HepG2 (cell line): ENCODE measurements at regions of chr7 and their contacts with region 1.

Region 1: DNA sequence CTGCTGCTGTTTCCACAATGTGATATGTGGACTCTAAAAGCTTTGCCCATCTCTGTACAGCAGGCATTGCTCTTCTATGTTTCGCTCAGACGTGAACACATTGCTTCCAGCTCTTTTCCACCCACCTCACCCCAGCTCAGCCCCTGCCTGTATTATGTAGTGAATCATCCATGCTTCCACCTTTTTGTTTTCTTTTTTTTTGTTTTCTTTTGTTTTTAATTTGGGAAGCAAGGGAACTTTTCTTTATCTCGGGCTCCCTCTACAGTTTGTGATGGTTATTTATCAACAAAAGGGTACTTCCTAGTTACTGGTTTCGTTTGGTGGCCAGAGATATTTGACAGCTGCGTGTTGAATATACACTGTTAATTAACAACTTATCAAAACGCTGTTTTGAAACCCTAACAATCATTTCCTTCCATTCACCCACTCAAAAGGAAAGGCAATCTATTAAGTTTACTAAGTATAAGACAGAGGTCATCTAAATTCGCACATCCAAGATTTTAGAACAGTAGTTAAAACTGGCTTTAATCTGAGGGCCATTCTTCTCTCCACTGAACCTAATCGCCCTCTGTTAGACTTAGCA is 127.9 kb upstream of the STK17A start:
- DNase-seq: peak; percentile 29
- ATAC-seq: peak; percentile 56
- H3K4me3 ChIP-seq: no peak overlapping the region
- H3K27ac ChIP-seq: no peak overlapping the region
- H3K4me1 ChIP-seq: peaks cover 27% of the 10 kb centered on the region
- H3K27me3 ChIP-seq: 0 out of 5 replicates have a peak, but pooled peaks cover 0 to 2% of the 10 kb centered on the region in 2 experiments
- CTCF ChIP-seq: peak; percentile 60
- EP300 ChIP-seq: no peak
- POLR2A ChIP-seq: no peak
- RAD21 ChIP-seq: no peak

Region 2: GRCh38 chr7:41599760-41600159 is 1855.3 kb before region 1 on chr7:
- CTCF ChIA-PET with region 1: no interaction called
- POLR2A ChIA-PET with region 1: no interaction called
- in situ Hi-C with region 1: no loop called
- intact Hi-C with region 1: loop called (anchors 10 kb)
- DNase-seq: no peak
- ATAC-seq: no peak
- H3K4me3 ChIP-seq: no peak overlapping the region
- H3K27ac ChIP-seq: no peak overlapping the region
- H3K4me1 ChIP-seq: no peaks in the 10 kb centered on the region
- H3K27me3 ChIP-seq: no peaks in the 10 kb centered on the region
- CTCF ChIP-seq: no peak
- EP300 ChIP-seq: no peak
- POLR2A ChIP-seq: no peak
- RAD21 ChIP-seq: no peak

Region 3: GRCh38 chr7:43479042-43479441 is 24.0 kb after region 1 on chr7:
- CTCF ChIA-PET with region 1: no interaction called
- POLR2A ChIA-PET with region 1: no interaction called
- in situ Hi-C with region 1: no loop called
- intact Hi-C with region 1: loop called (anchors 1 kb)
- DNase-seq: peak; percentile 33
- ATAC-seq: peak; percentile 52
- H3K4me3 ChIP-seq: no peak overlapping the region
- H3K27ac ChIP-seq: no peak overlapping the region
- H3K4me1 ChIP-seq: peaks cover 23% of the 10 kb centered on the region
- H3K27me3 ChIP-seq: no peaks in the 10 kb centered on the region
- CTCF ChIP-seq: peak; percentile 58
- EP300 ChIP-seq: no peak
- POLR2A ChIP-seq: no peak
- RAD21 ChIP-seq: no peak

Region 4: GRCh38 chr7:43513251-43513650 is 58.2 kb after region 1 on chr7:
- CTCF ChIA-PET with region 1: interaction called, 11 read pairs
- POLR2A ChIA-PET with region 1: no interaction called
- in situ Hi-C with region 1: no loop called
- intact Hi-C with region 1: loop called (anchors 1 kb)
- DNase-seq: no peak
- ATAC-seq: no peak
- H3K4me3 ChIP-seq: no peak overlapping the region
- H3K27ac ChIP-seq: no peak overlapping the region
- H3K4me1 ChIP-seq: peaks cover 37% of the 10 kb centered on the region
- H3K27me3 ChIP-seq: no peaks in the 10 kb centered on the region
- CTCF ChIP-seq: no peak
- EP300 ChIP-seq: no peak
- POLR2A ChIP-seq: no peak
- RAD21 ChIP-seq: no peak

Region 5: GRCh38 chr7:43700059-43700501 is 245.1 kb after region 1 on chr7:
- CTCF ChIA-PET with region 1: no interaction called
- POLR2A ChIA-PET with region 1: no interaction called
- in situ Hi-C with region 1: loop called (anchors 25 kb)
- intact Hi-C with region 1: loop called (anchors 5 kb)
- DNase-seq: peak; percentile 46
- ATAC-seq: 0 out of 3 replicates have a peak, but pooled peaks have one; percentile 38
- H3K4me3 ChIP-seq: no peak overlapping the region
- H3K27ac ChIP-seq: no peak overlapping the region
- H3K4me1 ChIP-seq: peaks cover 17% of the 10 kb centered on the region
- H3K27me3 ChIP-seq: no peaks in the 10 kb centered on the region
- CTCF ChIP-seq: peak; percentile 76
- EP300 ChIP-seq: no peak
- POLR2A ChIP-seq: no peak
- RAD21 ChIP-seq: peak; percentile 78

Region 6: GRCh38 chr7:43721193-43721806 is 266.3 kb after region 1 on chr7:
- CTCF ChIA-PET with region 1: no interaction called
- POLR2A ChIA-PET with region 1: no interaction called
- in situ Hi-C with region 1: loop called (anchors 25 kb)
- intact Hi-C with region 1: loop called (anchors 5 kb)
- DNase-seq: peak; percentile 39
- ATAC-seq: no peak
- H3K4me3 ChIP-seq: no peak overlapping the region
- H3K27ac ChIP-seq: no peak overlapping the region
- H3K4me1 ChIP-seq: peaks cover 12% of the 10 kb centered on the region
- H3K27me3 ChIP-seq: no peaks in the 10 kb centered on the region
- CTCF ChIP-seq: peak; percentile 55
- EP300 ChIP-seq: no peak
- POLR2A ChIP-seq: no peak
- RAD21 ChIP-seq: no peak

Region 7: DNA sequence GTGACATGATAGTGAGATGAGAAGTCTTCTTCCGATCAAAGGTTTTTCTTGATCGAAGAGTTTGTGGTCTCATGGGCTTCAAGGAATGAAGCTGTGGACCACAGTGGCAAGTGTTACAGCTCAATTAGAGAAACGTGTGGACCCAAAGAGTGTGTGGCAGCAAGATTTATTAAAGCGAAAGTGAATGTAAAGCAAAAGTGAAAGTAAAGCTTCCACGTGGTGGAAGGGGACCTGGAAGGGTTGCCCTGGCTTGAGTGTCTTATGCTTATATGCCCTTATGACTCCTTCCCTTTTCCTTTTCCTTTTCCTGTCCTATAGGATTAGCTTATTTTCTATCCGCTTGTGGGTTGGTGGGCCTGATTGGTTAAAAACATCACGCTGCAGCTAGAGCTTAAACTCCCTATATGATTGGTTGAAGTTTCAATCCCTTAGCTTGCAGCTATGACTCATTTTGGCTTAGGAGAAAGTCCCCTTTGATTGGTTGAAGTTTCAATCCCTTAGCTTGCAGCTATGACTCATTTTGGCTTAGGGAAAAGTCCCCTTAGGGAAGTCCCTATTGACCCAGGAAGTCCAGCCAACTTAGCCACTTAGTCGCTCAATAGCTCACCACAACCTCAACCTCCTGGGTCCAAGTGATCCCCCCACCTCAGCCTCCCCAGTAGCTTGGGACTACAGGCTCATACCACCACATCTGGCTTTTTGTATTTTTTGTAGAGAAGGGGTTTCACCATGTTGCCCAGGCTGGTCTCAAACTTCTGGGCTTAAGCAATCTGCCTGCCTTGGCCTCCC is 379.6 kb after region 1 on chr7:
- CTCF ChIA-PET with region 1: interaction called, 14 read pairs
- POLR2A ChIA-PET with region 1: no interaction called
- in situ Hi-C with region 1: loop called (anchors 25 kb)
- intact Hi-C with region 1: loop called (anchors 10 kb)
- DNase-seq: no peak
- ATAC-seq: no peak
- H3K4me3 ChIP-seq: peak overlapping the region in 2 of 3 experiments; percentile 8 to 40; a peak in 4 of 6 replicates
- H3K27ac ChIP-seq: no peak overlapping the region
- H3K4me1 ChIP-seq: peaks cover 23% of the 10 kb centered on the region
- H3K27me3 ChIP-seq: no peaks in the 10 kb centered on the region
- CTCF ChIP-seq: no peak
- EP300 ChIP-seq: no peak
- POLR2A ChIP-seq: no peak
- RAD21 ChIP-seq: no peak